CD4-positive, alpha-beta memory T cell (primary cell): ENCODE measurements at regions of chr10 and their contacts with region 1.

Region 1: GRCh38 chr10:71766702-71767419 is 6.5 kb downstream of the VSIR start:
- DNase-seq: peak in 1 of 5 donors; percentile 29
- H3K4me3 ChIP-seq: peak overlapping the region in 1 of 2 donors; percentile 25
- H3K4me3 Mint-ChIP-seq: peak overlapping the region; percentile 68 to 95 (median 78)
- H3K27ac ChIP-seq: peak overlapping the region; percentile 93
- H3K27ac Mint-ChIP-seq: peak overlapping the region; percentile 93 to 99 (median 95)
- H3K4me1 ChIP-seq: peaks cover 97% of the 10 kb centered on the region
- H3K4me1 Mint-ChIP-seq: peaks cover 67 to 99% (median 84%) of the 10 kb centered on the region in 4 donors
- H3K27me3 ChIP-seq: no peaks in the 10 kb centered on the region
- H3K27me3 Mint-ChIP-seq: no peaks in the 10 kb centered on the region

Region 2: DNA sequence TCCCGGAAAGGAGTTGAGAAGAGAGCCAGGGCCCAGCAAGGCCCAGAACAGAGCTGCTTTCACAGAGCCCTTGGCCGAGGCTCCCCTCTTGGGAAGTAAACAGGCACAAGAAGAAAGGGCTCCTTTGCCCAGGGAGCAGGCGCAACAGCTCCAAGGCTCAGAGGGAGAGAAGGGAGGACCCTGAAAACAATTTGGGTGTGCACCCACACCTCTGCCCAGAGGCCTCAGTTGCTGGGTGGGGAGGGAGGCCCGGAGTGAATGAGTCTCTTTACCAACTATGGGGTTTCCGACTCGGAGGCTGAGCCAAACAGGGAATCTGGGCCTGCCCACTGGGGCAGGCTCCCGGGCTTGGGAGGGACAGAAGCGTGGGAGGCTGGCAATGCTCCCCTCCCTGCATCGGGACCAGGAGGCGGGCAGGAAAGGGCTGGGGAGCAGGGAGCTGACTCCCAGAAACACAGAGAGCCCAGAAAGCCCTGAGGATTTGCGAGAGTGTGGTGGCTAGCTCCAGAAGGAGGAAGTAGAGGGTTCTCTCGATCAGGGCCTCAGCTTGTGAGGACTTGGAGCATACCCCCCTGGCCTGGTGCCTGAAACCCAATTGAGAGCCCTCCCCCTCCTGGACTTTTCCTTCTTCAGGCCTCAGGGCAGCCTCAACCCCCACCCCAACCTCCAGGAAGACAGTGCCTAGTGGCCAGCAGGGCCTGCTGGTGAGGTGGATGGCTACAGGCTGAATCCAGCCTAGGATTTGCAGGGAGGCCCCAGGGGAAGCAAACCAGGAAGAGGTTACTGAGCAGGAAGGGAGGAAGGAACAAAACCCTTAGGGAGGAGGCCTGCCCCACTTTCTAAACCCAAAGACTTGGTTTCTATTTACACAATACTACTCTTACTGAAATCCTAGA is 53.5 kb before region 1 on chr10:
- CTCF ChIA-PET with region 1: interaction called, 379 read pairs
- POLR2A ChIA-PET with region 1: interaction called, 62 read pairs
- intact Hi-C with region 1: no loop called
- DNase-seq: peak in 3 of 5 donors; percentile 35 to 51 (median 49)
- H3K4me3 ChIP-seq: peak overlapping the region; percentile 1 to 21
- H3K4me3 Mint-ChIP-seq: peak overlapping the region; percentile 76 to 93 (median 85)
- H3K27ac ChIP-seq: peak overlapping the region; percentile 69
- H3K27ac Mint-ChIP-seq: peak overlapping the region; percentile 96 to 99 (median 98)
- H3K4me1 ChIP-seq: peaks cover 62% of the 10 kb centered on the region
- H3K4me1 Mint-ChIP-seq: peaks cover 33 to 84% (median 62%) of the 10 kb centered on the region in 4 donors
- H3K27me3 ChIP-seq: no peaks in the 10 kb centered on the region
- H3K27me3 Mint-ChIP-seq: no peaks in the 10 kb centered on the region

Region 3: GRCh38 chr10:71748671-71749191 is 18.1 kb before region 1 on chr10:
- CTCF ChIA-PET with region 1: interaction called, 46 read pairs
- POLR2A ChIA-PET with region 1: interaction called, 1,035 read pairs
- intact Hi-C with region 1: loop called (anchors 1 kb)
- DNase-seq: peak; percentile 86 to 90 (median 87)
- H3K4me3 ChIP-seq: peak overlapping the region in 1 of 2 donors; percentile 39
- H3K4me3 Mint-ChIP-seq: peak overlapping the region; percentile 76 to 89 (median 84)
- H3K27ac ChIP-seq: peak overlapping the region; percentile 58
- H3K27ac Mint-ChIP-seq: peak overlapping the region; percentile 92 to 99 (median 98)
- H3K4me1 ChIP-seq: peaks cover 100% of the 10 kb centered on the region
- H3K4me1 Mint-ChIP-seq: peaks cover 74 to 98% (median 92%) of the 10 kb centered on the region in 4 donors
- H3K27me3 ChIP-seq: no peaks in the 10 kb centered on the region
- H3K27me3 Mint-ChIP-seq: no peaks in the 10 kb centered on the region

Region 4: DNA sequence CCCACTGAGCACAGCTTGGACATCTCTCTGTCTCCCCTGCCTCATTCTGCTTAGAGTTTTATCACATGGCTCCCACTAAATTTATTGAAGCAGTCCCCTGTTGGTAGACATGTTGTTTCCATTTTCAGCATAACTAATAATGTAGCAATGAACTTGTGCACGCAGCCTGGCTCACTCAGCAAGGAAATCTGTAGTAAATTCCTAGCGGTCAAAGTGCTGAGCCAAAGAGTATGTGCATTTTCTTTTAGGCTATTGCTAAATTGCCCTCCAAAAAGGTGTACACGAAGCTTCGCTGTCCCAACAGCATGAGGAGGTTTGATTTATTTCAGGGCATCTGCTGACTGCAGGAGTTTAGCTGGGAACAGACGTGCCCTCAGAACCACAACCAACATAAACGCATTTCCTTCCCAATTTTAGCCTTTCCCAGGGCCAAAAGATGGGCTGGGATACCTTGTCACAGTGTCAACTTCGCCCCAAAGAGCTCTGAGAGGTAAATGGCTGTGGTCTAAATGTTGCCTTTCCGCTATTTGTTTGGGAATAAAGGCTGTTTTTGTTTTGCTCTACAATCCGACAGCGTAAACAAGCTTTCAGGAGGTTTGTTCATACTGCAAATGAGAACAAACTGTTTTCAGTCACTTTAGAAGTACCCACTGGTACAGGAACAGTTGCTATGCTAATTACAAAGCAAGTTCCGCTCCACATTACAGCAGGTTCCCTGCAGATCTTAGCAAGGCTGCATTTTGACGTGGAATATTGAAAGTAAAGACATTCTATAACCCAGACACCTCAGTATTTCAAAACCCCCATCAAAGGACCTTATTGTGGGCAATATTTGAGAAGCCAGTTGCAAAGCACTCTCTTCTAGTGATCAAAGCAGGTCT is 10.3 kb before region 1 on chr10:
- CTCF ChIA-PET with region 1: interaction called, 109 read pairs
- POLR2A ChIA-PET with region 1: interaction called, 1,035 read pairs
- intact Hi-C with region 1: loop called (anchors 1 kb)
- DNase-seq: peak; percentile 5 to 76 (median 73)
- H3K4me3 ChIP-seq: peak overlapping the region in 1 of 2 donors; percentile 35
- H3K4me3 Mint-ChIP-seq: peak overlapping the region; percentile 54 to 87 (median 76)
- H3K27ac ChIP-seq: peak overlapping the region; percentile 53
- H3K27ac Mint-ChIP-seq: peak overlapping the region; percentile 95 to 99 (median 96)
- H3K4me1 ChIP-seq: peaks cover 94% of the 10 kb centered on the region
- H3K4me1 Mint-ChIP-seq: peaks cover 68 to 100% (median 83%) of the 10 kb centered on the region in 4 donors
- H3K27me3 ChIP-seq: no peaks in the 10 kb centered on the region
- H3K27me3 Mint-ChIP-seq: no peaks in the 10 kb centered on the region

Region 5: GRCh38 chr10:71850637-71851464 is 84.0 kb after region 1 on chr10 and contains the start of gene PSAP:
- CTCF ChIA-PET with region 1: no interaction called
- POLR2A ChIA-PET with region 1: interaction called, 10 read pairs
- intact Hi-C with region 1: loop called (anchors 2 kb)
- DNase-seq: peak; percentile 97 to 98 (median 97)
- H3K4me3 ChIP-seq: peak within 1 kb of the TSS; percentile 98 to 99
- H3K4me3 Mint-ChIP-seq: peak within 1 kb of the TSS; percentile 92 to 99 (median 97)
- H3K27ac ChIP-seq: peak within 1 kb of the TSS; percentile 81
- H3K27ac Mint-ChIP-seq: peak within 1 kb of the TSS; percentile 84 to 96 (median 92)
- H3K4me1 ChIP-seq: peaks cover 21% of the 10 kb centered on the region
- H3K4me1 Mint-ChIP-seq: peaks cover 28 to 51% (median 38%) of the 10 kb centered on the region in 4 donors
- H3K27me3 ChIP-seq: no peaks in the 10 kb centered on the region
- H3K27me3 Mint-ChIP-seq: no peaks in the 10 kb centered on the region
- total RNA-seq, gene PSAP: 248 to 257 TPM